ENCODE measurements at regions of chr1 and their contacts with region 1.

Region 1: GRCh38 chr1:16146279-16147155 is 9.4 kb downstream of the EPHA2 start:
- DNase-seq: peak; percentile 75 to 90
- H3K4me3 ChIP-seq: peak overlapping the region; percentile 86
- H3K27ac ChIP-seq: peak overlapping the region; percentile 92
- H3K4me1 ChIP-seq: peaks cover 94% of the 10 kb centered on the region
- H3K27me3 ChIP-seq: no peaks in the 10 kb centered on the region
- CTCF ChIP-seq: no peak

Region 2: DNA sequence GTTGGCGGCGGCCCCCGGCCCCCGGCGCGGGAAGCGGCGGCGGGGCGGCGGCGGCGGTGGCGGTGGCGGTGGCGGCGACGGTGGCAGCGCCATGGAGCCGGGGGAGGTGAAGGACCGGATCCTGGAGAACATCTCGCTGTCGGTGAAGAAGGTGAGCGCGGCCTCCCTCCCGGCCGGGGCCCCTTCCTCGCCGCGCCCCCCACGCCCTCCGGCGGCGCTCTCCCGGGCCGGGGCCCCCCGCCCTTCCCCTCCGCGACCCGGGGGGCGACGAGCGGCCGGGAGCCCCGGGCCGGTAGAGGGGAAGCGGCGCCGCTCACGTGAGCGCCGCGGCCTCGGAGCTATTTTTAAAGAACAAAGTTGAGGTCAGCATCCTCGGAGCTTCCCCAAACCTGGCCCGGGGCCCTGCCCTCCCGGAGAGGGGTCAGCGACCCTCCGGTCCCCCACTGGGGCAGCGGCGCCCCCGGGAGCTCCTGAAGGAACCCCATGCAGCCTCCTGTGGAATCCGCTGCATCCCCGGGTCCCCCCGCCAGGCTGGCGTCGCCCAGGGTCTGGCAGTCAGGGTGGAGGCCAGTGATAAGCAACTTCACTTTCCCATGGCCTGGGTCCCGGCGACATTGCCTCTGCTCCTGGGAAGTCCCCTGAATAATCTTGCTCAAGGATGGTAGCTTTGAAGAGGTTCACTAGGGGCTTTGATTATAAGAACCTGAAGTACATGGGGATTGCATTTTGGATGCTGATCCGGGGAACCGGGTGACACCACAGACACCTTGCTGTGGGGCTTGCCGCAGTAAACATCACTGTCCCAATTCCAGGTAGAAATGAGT is 461.8 kb before region 1 on chr1:
- CTCF ChIA-PET with region 1: no interaction called
- POLR2A ChIA-PET with region 1: no interaction called
- intact Hi-C with region 1: loop called (anchors 5 kb)
- DNase-seq: no peak
- H3K4me3 ChIP-seq: peak overlapping the region; percentile 61
- H3K27ac ChIP-seq: no peak overlapping the region
- H3K4me1 ChIP-seq: peaks cover 49% of the 10 kb centered on the region
- H3K27me3 ChIP-seq: no peaks in the 10 kb centered on the region
- CTCF ChIP-seq: no peak

Region 3: DNA sequence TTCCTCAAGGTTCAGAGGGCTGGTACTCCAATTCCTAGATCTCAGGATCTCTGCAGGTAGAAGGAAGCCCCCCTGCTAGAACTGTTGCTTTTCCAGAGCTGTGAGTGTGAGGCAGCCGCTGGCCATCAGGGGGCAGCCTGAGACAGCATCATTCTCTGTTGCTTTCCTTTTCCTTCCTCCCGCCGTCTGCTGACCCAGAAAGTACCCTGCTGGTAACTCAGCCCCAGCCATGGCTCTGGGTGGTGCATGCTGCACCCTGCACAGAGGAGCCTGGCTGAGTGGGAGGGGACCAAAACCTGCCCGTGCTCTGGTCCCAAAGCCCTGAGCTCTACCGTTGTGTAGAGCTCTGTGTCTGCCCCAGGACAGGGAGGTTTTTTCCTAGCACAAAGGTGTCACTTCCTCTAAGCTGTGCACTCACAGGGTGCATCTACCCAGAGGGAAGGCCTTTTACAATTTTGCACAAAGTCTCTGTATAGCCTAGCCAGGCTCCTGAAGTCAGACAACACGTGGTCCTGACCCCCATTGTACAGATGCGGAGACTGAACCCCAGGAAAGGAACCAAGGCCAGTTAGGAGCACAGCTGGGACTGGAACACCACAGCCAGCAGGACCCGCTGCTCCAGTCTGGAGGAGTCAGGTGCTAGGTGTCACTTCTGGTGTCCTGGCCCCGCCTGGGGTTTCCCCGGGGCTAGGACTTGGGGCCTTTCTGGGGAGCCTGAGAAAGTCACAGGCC is 67.4 kb before region 1 on chr1:
- CTCF ChIA-PET with region 1: interaction called, 12 read pairs
- POLR2A ChIA-PET with region 1: interaction called, 10 read pairs
- intact Hi-C with region 1: loop called (anchors 2 kb)
- DNase-seq: peak; percentile 67 to 82
- H3K4me3 ChIP-seq: no peak overlapping the region
- H3K27ac ChIP-seq: peak overlapping the region; percentile 20; the same call in 1 of the 2 replicates
- H3K4me1 ChIP-seq: peaks cover 63% of the 10 kb centered on the region
- H3K27me3 ChIP-seq: no peaks in the 10 kb centered on the region
- CTCF ChIP-seq: peak; percentile 92

Region 4: GRCh38 chr1:16173020-16173980 is 26.8 kb after region 1 on chr1:
- CTCF ChIA-PET with region 1: interaction called, 4 read pairs
- POLR2A ChIA-PET with region 1: interaction called, 6 read pairs
- intact Hi-C with region 1: loop called (anchors 1 kb)
- DNase-seq: peak; percentile 95 to 98
- H3K4me3 ChIP-seq: no peak overlapping the region
- H3K27ac ChIP-seq: peak overlapping the region; percentile 98
- H3K4me1 ChIP-seq: peaks cover 97% of the 10 kb centered on the region
- H3K27me3 ChIP-seq: no peaks in the 10 kb centered on the region
- CTCF ChIP-seq: no peak

Measured in PC-9 (cell line).